ENCODE measurements at regions of chr1 and their contacts with region 1.

Region 1: DNA sequence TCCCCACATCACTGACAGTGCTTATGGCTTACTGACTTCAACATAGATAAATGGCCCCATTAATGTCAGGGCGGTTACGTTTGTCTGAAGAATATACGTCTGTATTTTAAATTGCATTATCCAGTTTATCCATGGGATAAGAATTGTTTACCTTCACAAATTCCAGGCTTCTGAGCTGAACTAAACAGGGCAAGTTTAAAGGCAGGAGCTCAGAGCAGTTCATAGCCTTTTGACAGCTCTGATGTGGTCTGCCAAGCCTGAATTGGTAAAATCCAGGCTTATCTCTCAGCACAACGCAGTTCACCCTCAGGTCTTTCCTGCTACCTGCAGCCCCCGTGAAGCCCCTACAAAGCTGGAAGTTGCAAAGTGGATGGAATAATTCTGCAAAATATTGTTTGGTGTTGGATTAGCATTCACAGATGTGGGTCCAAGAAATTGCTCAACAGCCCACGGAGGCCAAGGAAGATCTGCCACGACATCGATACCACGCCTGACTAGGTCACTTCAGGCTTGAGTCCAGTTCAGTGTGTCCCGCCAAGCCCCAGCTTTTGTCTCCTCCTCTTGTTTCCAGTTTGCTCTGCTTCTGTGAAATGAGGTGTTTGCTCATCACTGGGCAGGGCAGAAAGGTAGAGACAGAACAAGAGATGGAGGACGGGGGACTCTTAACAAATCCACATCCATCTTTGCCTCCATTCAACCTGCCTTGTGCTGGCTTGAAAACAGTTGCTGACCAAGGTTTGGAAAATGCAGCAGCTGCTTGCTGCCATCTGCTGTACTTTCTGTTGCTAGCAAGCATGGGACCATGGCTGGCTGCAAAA is 79.8 kb upstream of the GREM2 start:
- DNase-seq: peak; percentile 69
- H3K4me3 ChIP-seq: peak overlapping the region in 1 of 2 experiments; percentile 16; a peak in 1 of 4 replicates
- H3K27ac ChIP-seq: peak overlapping the region in 1 of 2 experiments; percentile 50; a peak in 2 of 4 replicates
- H3K4me1 ChIP-seq: peaks cover 0 to 12% of the 10 kb centered on the region in 2 experiments; a peak in 2 of 4 replicates
- H3K27me3 ChIP-seq: no peaks in the 10 kb centered on the region
- CTCF ChIP-seq: peak; percentile 90
- EP300 ChIP-seq: no peak
- RAD21 ChIP-seq: peak; percentile 97

Region 2: GRCh38 chr1:240149484-240150094 is 542.1 kb before region 1 on chr1:
- CTCF ChIA-PET with region 1: interaction called, 14 read pairs
- POLR2A ChIA-PET with region 1: no interaction called
- DNase-seq: peak; percentile 39
- H3K4me3 ChIP-seq: no peak overlapping the region; a peak in 1 of 4 replicates
- H3K27ac ChIP-seq: no peak overlapping the region
- H3K4me1 ChIP-seq: peaks cover 0 to 3% of the 10 kb centered on the region in 2 experiments; a peak in 1 of 4 replicates
- H3K27me3 ChIP-seq: no peaks in the 10 kb centered on the region
- CTCF ChIP-seq: peak; percentile 88
- EP300 ChIP-seq: no peak
- RAD21 ChIP-seq: peak; percentile 63

Region 3: GRCh38 chr1:240199758-240200645 is 491.7 kb before region 1 on chr1:
- CTCF ChIA-PET with region 1: interaction called, 19 read pairs
- POLR2A ChIA-PET with region 1: no interaction called
- DNase-seq: peak; percentile 67
- H3K4me3 ChIP-seq: no peak overlapping the region
- H3K27ac ChIP-seq: peak overlapping the region; percentile 27 to 86; a peak in 3 of 4 replicates
- H3K4me1 ChIP-seq: peaks cover 0 to 6% of the 10 kb centered on the region in 2 experiments; a peak in 2 of 4 replicates
- H3K27me3 ChIP-seq: no peaks in the 10 kb centered on the region
- CTCF ChIP-seq: no peak
- EP300 ChIP-seq: peak in 1 of 2 experiments; percentile 75; a peak in 2 of 4 replicates
- RAD21 ChIP-seq: peak; percentile 20; the same call in 1 of the 2 replicates

Region 4: GRCh38 chr1:240611619-240612480 is 79.9 kb before region 1 on chr1 and contains the start of gene GREM2:
- CTCF ChIA-PET with region 1: interaction called, 25 read pairs
- POLR2A ChIA-PET with region 1: no interaction called
- DNase-seq: peak; percentile 78
- H3K4me3 ChIP-seq: peak within 1 kb of the TSS; percentile 72 to 75
- H3K27ac ChIP-seq: peak within 1 kb of the TSS; percentile 3 to 26; a peak in 2 of 4 replicates
- H3K4me1 ChIP-seq: peaks cover 0 to 7% of the 10 kb centered on the region in 2 experiments; a peak in 2 of 4 replicates
- H3K27me3 ChIP-seq: no peaks in the 10 kb centered on the region
- CTCF ChIP-seq: no peak
- EP300 ChIP-seq: no peak
- RAD21 ChIP-seq: no peak
- polyA plus RNA-seq, gene GREM2: 0.94 and 1.5 TPM in 2 replicates

Measured in SK-N-SH (cell line).